ENCODE measurements at regions of chr5 and their contacts with region 1.

Region 1: DNA sequence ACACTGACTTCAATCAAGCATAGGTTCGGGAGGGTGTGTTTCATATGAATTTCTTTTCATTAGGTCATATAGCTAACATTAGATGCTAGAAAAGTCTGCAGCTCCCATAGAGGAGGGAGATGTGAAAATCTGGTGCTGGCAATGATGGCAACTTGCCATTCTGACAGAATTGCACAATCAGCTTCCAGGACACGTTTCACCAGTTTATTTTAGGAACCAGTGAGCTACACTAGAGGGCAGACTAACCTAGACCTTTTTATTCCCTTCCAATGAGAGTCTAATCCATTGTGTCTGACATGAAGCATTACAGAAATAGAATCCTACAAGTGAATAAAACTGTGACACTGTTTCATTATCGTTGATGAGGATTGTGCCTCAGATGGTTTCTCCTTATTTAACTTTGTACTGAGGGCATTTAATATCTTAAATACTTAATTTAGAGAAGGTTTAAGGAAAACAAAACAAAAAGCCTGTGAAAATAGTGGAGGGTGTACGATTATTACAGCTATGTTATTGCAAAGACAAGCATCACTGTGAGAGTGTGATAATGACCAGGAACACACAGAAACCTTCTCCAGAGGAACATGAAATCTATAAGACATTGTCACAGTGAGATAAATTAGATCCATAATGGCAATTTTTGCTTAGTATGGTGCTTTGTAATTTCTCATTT is 363.3 kb upstream of the RPS23 start:
- DNase-seq: peak; percentile 84
- H3K4me3 ChIP-seq: no peak overlapping the region
- H3K27ac ChIP-seq: no peak overlapping the region
- H3K4me1 ChIP-seq: no peaks in the 10 kb centered on the region
- H3K27me3 ChIP-seq: peaks cover 3% of the 10 kb centered on the region; the same call in 1 of the 2 replicates

Region 2: DNA sequence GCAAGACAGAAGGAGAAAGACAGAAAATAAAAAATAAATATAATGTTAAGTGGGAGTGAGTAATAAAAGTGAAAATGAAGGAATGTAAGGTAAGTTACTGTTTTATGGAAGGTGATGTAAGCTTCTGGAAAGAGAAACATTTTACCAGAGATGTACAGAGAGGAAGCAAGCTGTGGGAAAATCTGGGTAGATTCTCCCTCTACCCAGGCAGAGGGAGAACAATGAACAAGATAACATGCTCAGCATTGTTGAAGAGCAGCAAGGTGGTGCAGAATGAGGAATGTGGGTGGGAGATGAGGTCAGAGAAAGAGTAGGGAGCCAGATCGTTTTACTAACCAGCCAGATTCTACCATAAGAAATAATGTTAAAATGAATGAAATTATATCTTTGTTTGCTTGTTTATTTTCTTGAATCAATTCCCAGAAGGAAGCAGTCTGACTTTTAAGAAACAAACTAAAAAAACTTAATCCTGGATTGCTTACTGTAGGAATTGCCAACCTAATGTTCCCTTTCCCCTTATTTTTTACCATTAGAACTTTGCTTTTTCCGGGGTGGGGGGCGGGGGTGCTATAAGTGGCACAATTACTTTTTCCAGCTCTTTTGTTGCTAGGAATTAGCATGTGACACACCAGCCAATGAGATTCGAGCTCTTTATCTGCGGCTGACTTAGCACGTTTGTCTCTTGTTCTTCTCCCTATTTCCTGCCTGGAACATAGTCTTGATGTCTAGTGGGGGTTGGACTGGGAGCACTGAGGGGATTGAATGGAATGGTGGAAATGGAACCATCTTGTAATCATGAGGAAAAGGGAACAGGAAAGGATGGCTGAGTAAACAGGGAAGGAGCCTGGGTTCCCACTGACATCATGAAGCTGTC is 79.0 kb after region 1 on chr5:
- in situ Hi-C with region 1: no loop called
- DNase-seq: no peak
- H3K4me3 ChIP-seq: no peak overlapping the region
- H3K27ac ChIP-seq: no peak overlapping the region
- H3K4me1 ChIP-seq: no peaks in the 10 kb centered on the region
- H3K27me3 ChIP-seq: no peaks in the 10 kb centered on the region

Region 3: DNA sequence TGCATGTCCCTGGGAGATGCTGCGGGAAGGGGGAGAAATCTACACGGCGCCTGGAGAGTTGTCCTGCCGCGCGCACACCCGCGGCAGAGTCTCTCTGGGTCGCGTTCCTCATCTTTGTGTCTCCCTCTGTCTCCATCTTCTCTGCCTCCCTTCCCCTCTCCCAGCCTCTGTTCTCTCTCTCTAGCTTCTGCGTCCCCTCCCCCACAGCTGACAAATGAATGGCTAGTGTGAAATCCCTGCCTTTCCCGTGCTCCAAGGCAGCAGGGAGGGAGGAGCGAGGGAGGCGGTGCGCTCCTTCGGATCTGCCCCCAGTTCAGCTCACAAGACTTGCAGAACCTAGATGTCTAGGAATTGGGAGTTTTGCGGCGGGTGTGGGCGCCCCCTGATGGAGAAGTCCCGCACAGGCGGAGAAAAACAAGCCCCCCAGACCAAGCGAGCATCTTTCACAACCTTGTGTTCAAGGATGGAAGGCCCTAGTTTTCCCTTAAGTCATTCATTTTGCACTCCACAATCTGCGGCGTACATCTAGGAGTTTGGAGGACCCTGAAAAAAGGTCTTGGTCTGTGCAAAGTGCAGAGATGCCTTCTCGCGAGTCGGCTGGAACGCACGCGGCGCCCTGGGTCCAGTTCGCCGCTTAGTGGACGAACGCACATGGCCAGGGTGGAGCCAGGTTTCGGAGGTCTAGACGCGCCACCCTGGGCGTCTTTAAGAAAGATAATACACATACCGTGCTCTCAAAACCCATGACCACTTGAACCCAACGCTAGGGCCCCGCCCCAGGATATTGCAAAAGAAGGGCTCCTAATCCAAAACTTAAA is 832.1 kb after region 1 on chr5:
- in situ Hi-C with region 1: loop called (anchors 25 kb)
- DNase-seq: peak; percentile 97
- H3K4me3 ChIP-seq: peak overlapping the region; percentile 90
- H3K27ac ChIP-seq: peak overlapping the region; percentile 93
- H3K4me1 ChIP-seq: peaks cover 24% of the 10 kb centered on the region
- H3K27me3 ChIP-seq: no peaks in the 10 kb centered on the region; the same call in 1 of the 2 replicates

Region 4: DNA sequence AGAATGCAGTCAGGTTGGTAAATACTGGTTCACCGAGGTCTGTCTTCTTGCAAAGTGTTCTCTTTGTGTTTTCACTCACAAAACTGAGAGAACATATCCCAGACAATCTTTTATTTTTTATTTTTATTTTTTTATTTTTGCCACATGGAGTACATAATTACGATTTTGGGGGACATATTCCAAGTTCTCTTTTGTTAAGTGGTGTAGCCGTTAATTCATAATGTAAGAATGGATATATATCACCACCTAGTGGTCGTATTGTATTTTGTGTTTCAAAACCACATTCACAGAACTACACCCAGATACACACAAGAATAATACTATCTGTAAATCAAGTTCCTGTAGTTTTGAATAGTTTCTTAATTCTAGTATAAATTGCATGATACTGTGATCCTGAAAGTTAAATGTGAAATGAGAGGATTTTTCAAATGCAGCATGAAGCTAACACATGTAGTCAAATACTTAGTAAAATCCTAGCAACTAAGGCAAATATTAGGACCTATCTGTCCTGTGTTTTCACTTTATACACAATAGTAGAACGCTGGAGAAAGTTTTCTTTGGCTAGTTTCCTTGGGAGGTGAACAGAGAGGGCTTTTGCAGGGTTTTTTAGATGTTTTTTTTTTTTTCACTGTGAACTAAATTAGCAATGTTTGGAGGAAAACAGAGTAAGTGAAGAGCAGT is 922.7 kb after region 1 on chr5:
- in situ Hi-C with region 1: loop called (anchors 10 kb)
- DNase-seq: peak; percentile 58
- H3K4me3 ChIP-seq: no peak overlapping the region
- H3K27ac ChIP-seq: no peak overlapping the region
- H3K4me1 ChIP-seq: peaks cover 41% of the 10 kb centered on the region
- H3K27me3 ChIP-seq: no peaks in the 10 kb centered on the region

Measured in GM23248 (cell line).